ENCODE measurements at regions of chr10 and their contacts with region 1.

Region 1: GRCh38 chr10:72273410-72274212 is at the start of gene DDIT4:
- DNase-seq: peak; percentile 99
- ATAC-seq: peak; percentile 93
- H3K4me3 Mint-ChIP-seq: peak within 1 kb of the TSS; percentile 90
- H3K27ac Mint-ChIP-seq: peak within 1 kb of the TSS; percentile 91
- H3K4me1 Mint-ChIP-seq: peaks cover 64% of the 10 kb centered on the region
- H3K27me3 Mint-ChIP-seq: no peaks in the 10 kb centered on the region
- total RNA-seq, gene DDIT4: 382 to 384 TPM

Region 2: GRCh38 chr10:72133517-72133916 is 140.1 kb before region 1 on chr10:
- CTCF ChIA-PET with region 1: interaction called, 21 read pairs
- POLR2A ChIA-PET with region 1: no interaction called
- DNase-seq: no peak
- ATAC-seq: no peak
- H3K4me3 Mint-ChIP-seq: no peak overlapping the region
- H3K27ac Mint-ChIP-seq: no peak overlapping the region
- H3K4me1 Mint-ChIP-seq: peaks cover 52% of the 10 kb centered on the region
- H3K27me3 Mint-ChIP-seq: no peaks in the 10 kb centered on the region

Region 3: GRCh38 chr10:72248468-72249151 is 25.0 kb before region 1 on chr10:
- CTCF ChIA-PET with region 1: interaction called, 35 read pairs
- POLR2A ChIA-PET with region 1: interaction called, 52 read pairs
- DNase-seq: peak; percentile 91
- ATAC-seq: peak; percentile 88
- H3K4me3 Mint-ChIP-seq: peak overlapping the region; percentile 80
- H3K27ac Mint-ChIP-seq: peak overlapping the region; percentile 95
- H3K4me1 Mint-ChIP-seq: peaks cover 85% of the 10 kb centered on the region
- H3K27me3 Mint-ChIP-seq: no peaks in the 10 kb centered on the region

Region 4: GRCh38 chr10:72285972-72286521 is 12.4 kb after region 1 on chr10:
- CTCF ChIA-PET with region 1: interaction called, 55 read pairs
- POLR2A ChIA-PET with region 1: interaction called, 82 read pairs
- DNase-seq: no peak
- ATAC-seq: no peak
- H3K4me3 Mint-ChIP-seq: no peak overlapping the region
- H3K27ac Mint-ChIP-seq: peak overlapping the region; percentile 23
- H3K4me1 Mint-ChIP-seq: peaks cover 43% of the 10 kb centered on the region
- H3K27me3 Mint-ChIP-seq: no peaks in the 10 kb centered on the region

Region 5: GRCh38 chr10:72308320-72308987 is 34.8 kb after region 1 on chr10:
- CTCF ChIA-PET with region 1: interaction called, 7 read pairs
- POLR2A ChIA-PET with region 1: interaction called, 32 read pairs
- DNase-seq: peak; percentile 53
- ATAC-seq: peak; percentile 53
- H3K4me3 Mint-ChIP-seq: no peak overlapping the region
- H3K27ac Mint-ChIP-seq: peak overlapping the region; percentile 80
- H3K4me1 Mint-ChIP-seq: peaks cover 76% of the 10 kb centered on the region
- H3K27me3 Mint-ChIP-seq: no peaks in the 10 kb centered on the region

Region 6: DNA sequence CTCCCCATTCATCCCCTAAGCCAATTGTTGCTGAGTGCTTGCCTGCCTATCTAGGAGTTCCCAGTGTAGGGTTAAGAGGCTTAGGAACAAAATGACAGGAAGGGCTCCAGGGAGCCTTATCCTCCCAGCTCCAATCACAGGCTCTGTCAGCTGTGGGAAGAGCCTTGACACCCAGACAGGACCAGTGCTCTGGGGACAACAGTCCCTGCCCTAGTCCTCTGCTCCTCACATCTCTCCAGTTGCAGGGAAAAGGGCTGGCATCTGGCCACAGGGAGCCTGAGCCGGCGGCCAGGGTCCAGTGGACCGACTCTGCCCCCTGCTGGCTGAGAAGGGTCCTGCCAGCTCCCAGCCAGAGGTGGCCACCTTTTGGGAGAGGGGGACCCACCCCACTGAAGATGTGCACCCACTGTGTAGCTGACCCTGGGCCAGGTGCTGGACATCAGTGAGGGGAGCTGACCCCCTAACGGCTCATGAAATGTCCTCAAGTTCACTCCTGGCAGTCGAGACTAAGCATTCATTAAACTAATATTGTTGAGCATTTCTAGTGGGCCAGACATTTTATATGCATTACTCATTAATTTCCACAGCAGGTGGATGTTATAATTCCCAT is 63.5 kb after region 1 on chr10:
- CTCF ChIA-PET with region 1: interaction called, 122 read pairs
- POLR2A ChIA-PET with region 1: interaction called, 75 read pairs
- DNase-seq: peak; percentile 75
- ATAC-seq: no peak
- H3K4me3 Mint-ChIP-seq: no peak overlapping the region
- H3K27ac Mint-ChIP-seq: peak overlapping the region; percentile 22
- H3K4me1 Mint-ChIP-seq: peaks cover 71% of the 10 kb centered on the region
- H3K27me3 Mint-ChIP-seq: no peaks in the 10 kb centered on the region

Region 7: GRCh38 chr10:72673280-72673679 is 399.7 kb after region 1 on chr10:
- CTCF ChIA-PET with region 1: no interaction called
- POLR2A ChIA-PET with region 1: no interaction called
- DNase-seq: no peak
- ATAC-seq: no peak
- H3K4me3 Mint-ChIP-seq: no peak overlapping the region
- H3K27ac Mint-ChIP-seq: no peak overlapping the region
- H3K4me1 Mint-ChIP-seq: no peaks in the 10 kb centered on the region
- H3K27me3 Mint-ChIP-seq: peaks cover 7% of the 10 kb centered on the region